Psoas muscle (tissue), 8 donors: ENCODE measurements at regions of chr16 and their contacts with region 1.

Region 1: GRCh38 chr16:30005341-30006094 is 5.3 kb downstream of the DOC2A start:
- DNase-seq: peak in 1 of 2 donors; percentile 72
- ATAC-seq: peak; percentile 67 to 85 (median 73)
- H3K4me3 ChIP-seq: no peak overlapping the region
- H3K27ac ChIP-seq: no peak overlapping the region
- H3K4me1 ChIP-seq: no peaks in the 10 kb centered on the region
- H3K27me3 ChIP-seq: peaks cover 0 to 15% (median 6%) of the 10 kb centered on the region in 3 donors
- CTCF ChIP-seq: peak; percentile 83

Region 2: DNA sequence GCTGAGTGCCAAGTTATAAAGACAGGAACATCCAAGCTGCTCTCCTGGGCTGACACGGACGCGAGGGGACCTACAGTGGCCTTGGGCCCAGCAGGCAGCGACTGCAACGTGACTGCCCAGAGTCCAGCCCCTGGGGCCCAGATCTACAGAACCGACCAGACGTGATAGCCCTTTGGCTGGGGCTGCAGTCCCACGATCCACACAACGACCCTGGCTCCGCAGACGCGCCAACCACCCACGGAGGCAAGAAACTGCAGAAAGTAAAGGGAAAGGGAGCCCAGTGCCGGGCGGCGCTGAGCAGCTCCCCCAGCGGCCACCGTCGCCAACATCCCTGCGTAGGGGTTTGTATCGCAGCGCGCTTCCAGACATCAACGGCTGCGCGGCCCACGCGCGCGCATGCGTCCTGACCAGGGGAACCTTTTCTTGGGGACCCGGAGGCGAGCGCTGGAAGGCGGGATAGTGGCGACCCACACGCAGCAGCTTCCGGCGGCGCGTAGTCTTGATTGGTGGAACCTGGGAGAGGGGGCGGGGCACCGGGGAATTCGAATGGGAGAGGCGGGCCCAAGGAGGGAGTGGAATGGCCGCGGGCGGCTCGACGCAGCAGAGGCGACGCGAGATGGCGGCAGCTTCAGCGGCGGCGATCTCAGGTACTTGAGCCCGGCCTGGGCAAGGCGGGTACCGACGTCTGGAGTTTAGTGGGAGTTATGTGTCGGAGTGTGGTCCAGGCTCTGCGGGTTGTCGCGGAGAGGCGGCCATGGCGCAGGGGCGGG is 215.2 kb before region 1 on chr16 and contains the start of gene KIF22:
- intact Hi-C with region 1: loop called in 1 of 2 experiments (anchors 5 kb)
- DNase-seq: peak; percentile 99 to 100
- ATAC-seq: peak; percentile 99 to 100 (median 99)
- H3K4me3 ChIP-seq: peak within 1 kb of the TSS; percentile 83
- H3K27ac ChIP-seq: peak within 1 kb of the TSS; percentile 91
- H3K4me1 ChIP-seq: peaks cover 18% of the 10 kb centered on the region
- H3K27me3 ChIP-seq: no peaks in the 10 kb centered on the region
- CTCF ChIP-seq: peak; percentile 68
- total RNA-seq, gene KIF22: 12.6 to 23.8 (median 14.3) TPM

Region 3: GRCh38 chr16:29862884-29863668 is 142.4 kb before region 1 on chr16 and contains the start of gene CDIPT:
- intact Hi-C with region 1: loop called (anchors 5 kb)
- DNase-seq: peak; percentile 95 to 97
- ATAC-seq: peak; percentile 98 to 99 (median 99)
- H3K4me3 ChIP-seq: peak within 1 kb of the TSS; percentile 95
- H3K27ac ChIP-seq: peak within 1 kb of the TSS; percentile 85
- H3K4me1 ChIP-seq: peaks cover 10% of the 10 kb centered on the region
- H3K27me3 ChIP-seq: no peaks in the 10 kb centered on the region
- CTCF ChIP-seq: peak; percentile 39
- total RNA-seq, gene CDIPT: 24.7 to 36.4 (median 32.3) TPM

Region 4: DNA sequence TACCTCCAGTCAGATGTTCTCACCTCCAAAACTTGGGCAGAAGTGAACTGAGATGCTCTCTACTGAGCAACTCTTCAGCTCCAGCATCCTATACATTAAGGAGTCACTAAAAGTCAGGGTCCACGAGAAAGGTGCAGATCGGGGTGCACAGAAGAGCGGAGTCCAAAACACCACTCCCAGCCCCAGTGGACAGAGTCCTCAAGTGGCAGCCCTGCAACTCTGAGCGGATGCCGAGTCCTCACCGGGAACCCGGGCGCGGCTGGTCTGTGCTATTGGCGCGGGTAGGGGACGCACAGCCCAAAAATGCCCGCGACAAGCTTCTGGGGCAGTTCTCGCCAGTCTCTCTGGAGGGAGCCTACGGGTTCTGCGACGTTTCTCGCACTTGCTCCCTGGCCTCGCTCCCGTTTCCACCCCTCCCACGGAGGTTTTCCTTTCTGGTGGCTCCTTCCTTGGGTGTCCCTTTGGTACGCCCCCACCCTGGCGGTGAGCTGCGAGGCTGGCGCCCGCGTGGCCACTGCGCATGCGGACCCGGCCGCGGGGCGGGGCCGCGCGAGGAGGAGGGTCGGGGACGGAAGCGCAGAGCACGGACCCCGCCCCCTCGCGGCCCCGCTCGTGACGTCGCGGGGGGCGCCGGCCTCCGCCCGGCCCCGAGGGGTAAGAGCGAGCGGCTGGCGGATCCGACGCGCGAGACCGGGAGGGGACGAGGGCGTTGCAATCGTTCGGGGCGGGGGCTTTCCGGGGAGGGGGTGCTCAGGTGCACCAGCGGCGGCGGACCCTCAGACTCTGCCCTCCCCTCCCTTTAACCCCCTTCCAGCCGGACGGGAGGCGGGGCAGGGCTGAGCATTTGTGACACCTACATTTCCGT is 43.8 kb before region 1 on chr16 and contains the start of gene TMEM219:
- intact Hi-C with region 1: loop called in 1 of 2 experiments (anchors 5 kb)
- DNase-seq: peak; percentile 91 to 95
- ATAC-seq: peak; percentile 98 to 99 (median 99)
- H3K4me3 ChIP-seq: peak within 1 kb of the TSS; percentile 75
- H3K27ac ChIP-seq: peak within 1 kb of the TSS; percentile 83
- H3K4me1 ChIP-seq: no peaks in the 10 kb centered on the region
- H3K27me3 ChIP-seq: no peaks in the 10 kb centered on the region
- CTCF ChIP-seq: peak; percentile 45
- total RNA-seq, gene TMEM219: 39.6 to 64.5 (median 50.3) TPM

Region 5: GRCh38 chr16:31142109-31143010 is 1136.8 kb after region 1 on chr16:
- intact Hi-C with region 1: no loop called
- DNase-seq: peak; percentile 99
- ATAC-seq: peak; percentile 91 to 95 (median 93)
- H3K4me3 ChIP-seq: peak overlapping the region; percentile 70
- H3K27ac ChIP-seq: peak overlapping the region; percentile 82
- H3K4me1 ChIP-seq: peaks cover 23% of the 10 kb centered on the region
- H3K27me3 ChIP-seq: no peaks in the 10 kb centered on the region
- CTCF ChIP-seq: peak; percentile 93